ENCODE measurements at regions of chr7 and their contacts with region 1.

Region 1: DNA sequence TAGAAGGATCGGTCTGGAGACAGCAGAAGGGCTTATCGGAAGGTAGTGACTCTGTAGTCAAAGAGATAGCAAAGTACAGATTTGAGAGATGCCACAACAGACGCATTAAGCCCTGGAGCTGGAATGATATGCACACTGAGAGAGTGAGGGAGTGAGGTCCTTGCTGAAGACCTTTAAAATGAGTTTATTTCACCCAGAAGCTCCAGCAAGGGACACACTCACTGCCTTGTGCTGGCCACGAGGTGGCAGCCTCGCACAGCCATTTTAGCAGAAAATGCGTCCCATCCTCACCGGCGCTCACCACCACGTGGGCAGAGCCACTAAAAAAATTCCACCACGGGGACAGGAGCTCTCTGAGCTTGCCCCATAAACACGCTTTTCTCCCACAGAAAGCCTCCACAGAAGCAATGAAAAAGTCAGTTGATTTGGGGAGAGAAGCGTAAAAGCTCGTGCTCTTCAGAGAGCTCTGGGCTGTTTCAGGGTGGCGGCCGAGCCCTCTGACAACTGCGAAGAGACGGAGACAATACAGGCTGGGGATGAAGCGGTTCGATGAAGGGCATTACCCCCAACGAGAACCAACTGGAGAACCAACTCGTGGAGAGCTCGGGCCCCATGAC is 163.0 kb upstream of the KLF14 start:
- DNase-seq: peak; percentile 71 to 77
- ATAC-seq: peak; percentile 48 to 74 (median 65)
- H3K4me3 ChIP-seq: no peak overlapping the region
- H3K27ac ChIP-seq: peak overlapping the region in 7 of 10 donors; percentile 11 to 74 (median 56)
- H3K4me1 ChIP-seq: peaks cover 20 to 86% (median 57%) of the 10 kb centered on the region in 9 donors
- H3K27me3 ChIP-seq: no peaks in the 10 kb centered on the region
- CTCF ChIP-seq: peak; percentile 76 to 91 (median 85)

Region 2: DNA sequence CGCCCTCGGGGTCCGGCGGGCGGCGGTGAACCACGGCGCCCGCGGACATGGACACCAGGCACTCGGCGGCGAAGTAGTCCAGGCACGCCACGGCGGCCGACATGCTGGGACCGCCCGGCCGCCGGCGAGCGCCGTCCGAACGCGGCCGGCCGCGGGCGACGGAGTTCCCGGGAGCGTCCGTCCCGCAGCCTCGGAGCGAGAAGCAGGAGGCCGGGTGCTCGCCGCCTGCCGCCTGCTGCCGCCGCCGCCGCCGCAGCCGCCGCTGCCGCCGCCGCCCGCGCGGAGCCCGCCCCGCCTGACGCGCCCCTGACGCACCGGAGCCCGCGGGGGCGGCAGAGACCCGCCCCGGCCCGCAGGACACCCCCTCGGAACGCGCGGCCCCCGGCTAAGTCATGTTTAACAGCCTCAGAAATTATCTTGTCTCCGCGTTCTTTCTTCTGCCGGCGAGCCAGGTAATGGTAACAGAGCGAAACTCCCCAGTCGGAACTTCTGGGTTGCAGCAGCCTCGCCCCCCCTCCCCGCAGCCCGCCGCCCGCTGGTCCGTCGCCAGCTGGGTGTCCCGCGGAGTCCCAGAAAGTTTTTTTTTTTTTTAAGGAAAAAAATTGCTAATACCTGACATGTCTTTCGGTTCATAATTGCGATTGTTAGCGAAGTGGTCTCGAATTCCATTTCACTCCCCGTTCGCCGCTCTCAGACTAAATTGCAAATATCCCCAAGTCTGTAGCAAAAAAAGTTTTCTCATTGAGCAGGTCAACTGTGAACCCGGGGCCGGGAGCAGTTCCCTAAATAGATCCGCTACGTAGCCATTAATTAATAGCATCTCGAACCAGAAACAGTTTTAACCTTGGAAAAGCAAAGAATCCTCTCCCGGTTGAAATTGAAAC is 162.8 kb before region 1 on chr7 and contains the start of gene KLF14:
- intact Hi-C with region 1: no loop called
- DNase-seq: peak in 1 of 2 donors; percentile 15
- ATAC-seq: peak in 3 of 8 donors; percentile 33 to 66 (median 64)
- H3K4me3 ChIP-seq: peak within 1 kb of the TSS in 9 of 10 donors; percentile 26 to 55 (median 51)
- H3K27ac ChIP-seq: peak within 1 kb of the TSS in 2 of 10 donors; percentile 26 to 36
- H3K4me1 ChIP-seq: peaks cover 0 to 8% (median 0%) of the 10 kb centered on the region in 9 donors
- H3K27me3 ChIP-seq: peaks cover 0 to 98% (median 87%) of the 10 kb centered on the region in 7 donors
- CTCF ChIP-seq: no peak
- total RNA-seq, gene KLF14: 0.07 to 0.49 (median 0.14) TPM in 7 of 10 donors, not detected in the others

Region 3: GRCh38 chr7:130988443-130988842 is 91.4 kb after region 1 on chr7:
- intact Hi-C with region 1: loop called in 1 of 10 experiments (anchors 5 kb)
- DNase-seq: no peak
- ATAC-seq: peak in 1 of 8 donors; percentile 27
- H3K4me3 ChIP-seq: no peak overlapping the region
- H3K27ac ChIP-seq: peak overlapping the region in 3 of 10 donors; percentile 13 to 38 (median 36)
- H3K4me1 ChIP-seq: peaks cover 15 to 98% (median 75%) of the 10 kb centered on the region in 9 donors
- H3K27me3 ChIP-seq: no peaks in the 10 kb centered on the region
- CTCF ChIP-seq: no peak

Region 4: DNA sequence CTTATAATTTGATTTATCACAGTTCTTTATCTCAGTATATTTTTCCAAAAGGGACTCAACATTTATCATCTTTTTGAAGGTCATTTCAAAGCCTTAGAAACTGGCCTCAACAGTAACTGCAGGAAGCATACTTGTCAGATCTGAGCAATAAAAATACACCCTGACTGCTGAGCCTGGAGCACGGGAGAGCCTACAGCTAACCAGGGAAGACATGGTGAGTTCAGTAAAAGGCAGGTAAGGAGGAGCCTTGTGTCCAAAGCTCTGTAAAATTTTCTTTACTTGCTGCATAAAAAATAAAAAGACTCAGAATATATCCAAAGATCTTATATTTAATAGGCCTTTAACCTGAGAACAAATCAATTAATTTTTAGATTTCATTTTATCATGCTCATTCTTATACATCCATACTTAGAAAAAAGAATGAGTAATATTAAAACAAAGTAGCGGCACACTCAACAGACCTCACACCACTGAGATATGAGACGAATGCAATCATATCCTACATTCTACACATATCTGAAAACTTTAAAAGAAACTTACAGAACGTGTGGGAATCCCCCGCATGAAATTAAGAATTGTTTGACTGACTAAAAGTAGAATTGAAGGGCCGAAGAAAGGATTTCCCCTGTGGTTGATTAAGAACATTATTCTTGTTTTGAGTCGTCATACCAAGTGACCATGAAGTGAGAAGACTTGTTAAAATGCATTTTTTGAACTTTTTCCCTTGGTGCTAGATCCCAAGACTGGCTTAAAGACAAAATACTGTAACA is 134.3 kb after region 1 on chr7:
- intact Hi-C with region 1: loop called in 1 of 10 experiments (anchors 2 kb)
- DNase-seq: no peak
- ATAC-seq: no peak
- H3K4me3 ChIP-seq: no peak overlapping the region
- H3K27ac ChIP-seq: no peak overlapping the region
- H3K4me1 ChIP-seq: peaks cover 6 to 89% (median 60%) of the 10 kb centered on the region in 9 donors
- H3K27me3 ChIP-seq: no peaks in the 10 kb centered on the region
- CTCF ChIP-seq: no peak

Region 5: DNA sequence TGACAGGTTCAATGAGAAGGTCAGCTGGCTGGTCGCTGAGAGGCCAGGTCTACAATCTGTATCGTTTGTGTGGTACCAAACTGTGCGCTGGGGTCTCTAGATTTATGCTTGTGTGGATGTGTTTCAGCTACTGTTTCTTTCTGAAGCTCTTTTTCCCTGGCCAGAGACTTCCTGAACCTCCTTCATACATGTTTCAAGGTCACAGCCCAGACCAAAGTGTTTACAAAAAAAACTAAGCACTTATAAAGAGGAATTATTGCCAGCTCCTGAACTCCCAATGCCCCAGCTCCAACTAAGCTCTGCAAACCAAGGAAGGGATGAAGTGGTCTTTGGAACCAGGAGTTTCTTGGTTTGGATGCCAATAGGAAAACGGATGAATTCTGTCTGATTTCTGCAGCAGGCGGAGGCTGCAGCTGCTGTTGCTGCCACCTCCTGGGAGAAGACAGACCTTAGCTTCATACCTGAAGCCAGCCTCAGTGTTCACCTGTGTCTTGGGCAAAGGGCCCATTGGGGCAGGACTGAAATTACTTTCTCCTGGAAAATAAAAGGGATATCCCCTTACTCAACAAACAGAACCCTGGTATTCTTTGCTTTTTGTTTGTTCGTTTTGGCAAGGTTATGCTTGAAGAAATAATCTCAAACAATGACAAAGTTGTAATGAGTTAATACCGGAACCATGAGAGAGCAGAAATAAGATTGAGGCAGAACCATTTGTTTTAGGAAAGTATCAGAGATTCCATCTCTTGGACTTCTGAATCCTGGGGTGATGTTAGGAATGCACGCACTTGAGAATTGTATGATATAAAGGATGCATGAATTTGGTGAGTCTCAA is 406.1 kb after region 1 on chr7:
- intact Hi-C with region 1: loop called in 2 of 10 experiments (anchors 5 to 10 kb)
- DNase-seq: peak in 1 of 2 donors; percentile 23
- ATAC-seq: peak; percentile 36 to 66 (median 49)
- H3K4me3 ChIP-seq: no peak overlapping the region
- H3K27ac ChIP-seq: peak overlapping the region in 9 of 10 donors; percentile 3 to 78 (median 48)
- H3K4me1 ChIP-seq: peaks cover 0 to 40% (median 23%) of the 10 kb centered on the region in 9 donors
- H3K27me3 ChIP-seq: no peaks in the 10 kb centered on the region
- CTCF ChIP-seq: peak in 8 of 9 donors; percentile 34 to 72 (median 59)

Region 6: GRCh38 chr7:131355921-131356777 is 459.1 kb after region 1 on chr7:
- intact Hi-C with region 1: no loop called
- DNase-seq: peak in 1 of 2 donors; percentile 32
- ATAC-seq: peak in 2 of 8 donors; percentile 19 to 28
- H3K4me3 ChIP-seq: no peak overlapping the region
- H3K27ac ChIP-seq: no peak overlapping the region
- H3K4me1 ChIP-seq: peaks cover 0 to 87% (median 48%) of the 10 kb centered on the region in 9 donors
- H3K27me3 ChIP-seq: no peaks in the 10 kb centered on the region
- CTCF ChIP-seq: no peak

Region 7: DNA sequence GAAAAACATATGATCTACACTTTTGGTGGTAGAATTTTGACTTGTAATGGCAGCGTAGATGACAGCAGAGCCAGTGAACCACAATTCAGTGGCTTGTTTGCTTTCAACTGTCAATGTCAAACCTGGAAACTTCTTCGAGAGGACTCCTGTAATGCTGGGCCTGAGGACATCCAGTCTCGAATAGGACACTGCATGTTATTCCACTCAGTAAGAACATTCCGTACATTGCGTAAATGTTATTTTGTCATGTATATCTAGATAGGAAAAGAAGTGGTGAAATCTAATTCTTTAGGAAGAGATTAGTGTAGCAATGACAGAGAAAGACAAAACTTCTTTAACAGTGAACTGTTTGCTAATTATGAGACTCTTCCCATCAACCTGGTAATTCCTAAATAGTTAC is 546.5 kb after region 1 on chr7:
- intact Hi-C with region 1: loop called in 1 of 10 experiments (anchors 5 kb)
- DNase-seq: no peak
- ATAC-seq: peak in 4 of 8 donors; percentile 35 to 88 (median 48)
- H3K4me3 ChIP-seq: no peak overlapping the region
- H3K27ac ChIP-seq: no peak overlapping the region
- H3K4me1 ChIP-seq: peaks cover 0 to 9% (median 0%) of the 10 kb centered on the region in 9 donors
- H3K27me3 ChIP-seq: no peaks in the 10 kb centered on the region
- CTCF ChIP-seq: no peak

Measured in heart right ventricle (tissue), 16 donors.